BJ (cell line): ENCODE measurements at regions of chr5 and their contacts with region 1.

Region 1: DNA sequence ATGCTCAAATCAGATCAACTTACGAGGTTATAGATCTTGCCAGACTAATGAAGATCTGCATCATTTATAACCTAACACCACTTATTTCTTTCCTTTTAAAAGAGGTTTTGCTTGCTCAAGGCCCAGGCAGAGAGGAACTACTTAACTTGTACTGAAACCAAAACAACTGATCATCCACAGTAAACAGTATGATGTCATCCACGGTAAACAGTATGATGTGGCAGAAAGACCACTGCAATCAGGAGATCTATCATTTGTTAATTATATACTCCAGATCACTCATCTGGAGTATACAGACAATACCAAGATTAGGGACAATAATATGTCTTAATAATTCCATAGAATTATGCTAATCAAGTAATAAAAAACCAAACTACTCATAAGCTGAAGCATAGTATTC is 116.8 kb downstream of the ADAMTS6 start:
- DNase-seq: no peak
- H3K4me3 ChIP-seq: no peak overlapping the region
- H3K27me3 ChIP-seq: no peaks in the 10 kb centered on the region
- CTCF ChIP-seq: no peak

Region 2: GRCh38 chr5:65190328-65191053 is 174.4 kb before region 1 on chr5:
- CTCF ChIA-PET with region 1: no interaction called
- POLR2A ChIA-PET with region 1: no interaction called
- DNase-seq: peak; percentile 99
- H3K4me3 ChIP-seq: no peak overlapping the region
- H3K27me3 ChIP-seq: no peaks in the 10 kb centered on the region
- CTCF ChIP-seq: no peak

Region 3: GRCh38 chr5:65252977-65253376 is 111.9 kb before region 1 on chr5:
- CTCF ChIA-PET with region 1: no interaction called
- POLR2A ChIA-PET with region 1: no interaction called
- DNase-seq: no peak
- H3K4me3 ChIP-seq: no peak overlapping the region
- H3K27me3 ChIP-seq: no peaks in the 10 kb centered on the region
- CTCF ChIP-seq: no peak

Region 4: DNA sequence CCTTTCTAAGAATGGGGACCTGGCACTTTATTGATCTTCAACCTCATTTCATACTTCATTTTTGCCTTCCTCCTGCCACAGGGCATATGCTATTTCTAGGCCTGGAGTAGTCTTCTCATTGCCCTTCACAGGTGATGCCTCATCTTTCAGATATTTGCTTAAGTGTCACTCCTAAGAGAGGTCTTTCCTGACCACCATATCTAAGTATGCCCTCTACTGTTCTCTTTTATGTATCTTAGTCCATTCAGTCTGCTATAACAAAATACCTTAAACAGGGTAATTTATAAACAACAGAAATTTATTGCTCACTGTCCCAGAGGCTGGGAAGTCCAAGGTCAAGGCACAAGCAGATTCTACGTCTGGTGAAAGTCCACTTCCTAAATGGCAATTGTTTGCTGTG is 17.7 kb after region 1 on chr5:
- CTCF ChIA-PET with region 1: interaction called, 3 read pairs
- POLR2A ChIA-PET with region 1: interaction called, 10 read pairs
- DNase-seq: no peak
- H3K4me3 ChIP-seq: no peak overlapping the region
- H3K27me3 ChIP-seq: no peaks in the 10 kb centered on the region
- CTCF ChIP-seq: no peak